Panc1 (cell line): ENCODE measurements at regions of chr4 and their contacts with region 1.

Region 1: DNA sequence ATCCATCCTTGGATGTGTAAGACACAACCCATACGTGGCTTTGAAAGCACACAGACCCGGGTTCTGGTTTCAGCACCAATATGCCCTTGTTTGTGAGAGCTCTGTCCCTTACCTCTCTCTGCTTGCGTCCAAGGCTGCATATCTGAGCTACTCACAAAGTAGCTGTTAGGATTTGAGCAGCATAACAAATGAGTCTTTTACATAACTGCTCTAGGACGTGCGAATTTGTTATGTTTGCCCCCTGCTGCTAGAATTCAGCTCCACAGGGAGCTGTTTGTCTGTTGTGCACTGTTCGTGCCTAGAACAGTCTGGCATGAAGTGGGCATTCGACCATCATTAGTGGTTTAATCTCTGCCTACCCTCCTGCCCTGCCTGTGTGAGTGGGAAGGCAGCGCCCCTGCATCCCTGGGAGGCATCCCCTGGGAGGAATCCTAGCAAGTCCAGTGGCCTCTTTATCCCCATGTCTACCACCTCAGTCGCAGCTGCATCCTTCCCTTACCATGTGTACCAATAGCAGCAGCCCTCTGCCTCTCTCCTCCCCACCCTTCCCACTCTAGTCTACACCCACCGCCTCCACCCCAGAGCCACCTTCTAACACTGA is 42.1 kb downstream of the SLC2A9 start:
- DNase-seq: no peak
- ATAC-seq: peak; percentile 68
- H3K4me3 ChIP-seq: no peak overlapping the region
- H3K27ac ChIP-seq: peak overlapping the region; percentile 17; the same call in 1 of the 2 replicates
- H3K4me1 ChIP-seq: no peaks in the 10 kb centered on the region
- H3K27me3 ChIP-seq: no peaks in the 10 kb centered on the region
- CTCF ChIP-seq: no peak

Region 2: DNA sequence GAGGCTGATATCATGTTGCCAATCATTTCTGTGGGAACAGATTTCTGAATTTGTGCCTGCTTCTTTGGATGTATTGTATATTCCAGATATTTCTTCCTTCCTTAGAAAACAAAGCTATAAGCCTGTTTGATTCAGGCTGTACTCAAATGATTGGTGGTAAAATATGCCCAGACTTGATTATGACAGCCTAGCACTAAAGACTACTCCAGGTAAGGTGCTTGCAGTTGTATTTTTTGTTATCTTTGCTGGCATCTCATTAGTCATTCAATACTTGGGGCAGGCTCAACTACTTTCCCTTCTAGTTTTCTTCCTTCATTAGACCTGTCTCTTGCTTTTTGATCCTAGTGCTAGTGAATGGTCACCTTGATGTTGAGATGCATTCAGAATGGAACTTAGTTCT is 387.4 kb after region 1 on chr4:
- CTCF ChIA-PET with region 1: no interaction called
- POLR2A ChIA-PET with region 1: no interaction called
- in situ Hi-C with region 1: no loop called
- intact Hi-C with region 1: no loop called
- DNase-seq: no peak
- ATAC-seq: no peak
- H3K4me3 ChIP-seq: no peak overlapping the region
- H3K27ac ChIP-seq: no peak overlapping the region
- H3K4me1 ChIP-seq: no peaks in the 10 kb centered on the region
- H3K27me3 ChIP-seq: no peaks in the 10 kb centered on the region
- CTCF ChIP-seq: no peak

Region 3: GRCh38 chr4:10506077-10506476 is 526.9 kb after region 1 on chr4:
- CTCF ChIA-PET with region 1: interaction called, 10 read pairs
- POLR2A ChIA-PET with region 1: no interaction called
- in situ Hi-C with region 1: no loop called
- intact Hi-C with region 1: no loop called
- DNase-seq: no peak
- ATAC-seq: no peak
- H3K4me3 ChIP-seq: no peak overlapping the region
- H3K27ac ChIP-seq: no peak overlapping the region
- H3K4me1 ChIP-seq: no peaks in the 10 kb centered on the region
- H3K27me3 ChIP-seq: no peaks in the 10 kb centered on the region
- CTCF ChIP-seq: no peak